ENCODE measurements at regions of chr2 and their contacts with region 1.

Region 1: GRCh38 chr2:24827321-24828237 is 34.4 kb downstream of the CENPO start:
- DNase-seq: peak; percentile 85
- ATAC-seq: peak; percentile 87
- H3K4me3 ChIP-seq: no peak overlapping the region
- H3K27ac ChIP-seq: no peak overlapping the region
- H3K4me1 ChIP-seq: no peaks in the 10 kb centered on the region
- H3K27me3 ChIP-seq: no peaks in the 10 kb centered on the region

Region 2: DNA sequence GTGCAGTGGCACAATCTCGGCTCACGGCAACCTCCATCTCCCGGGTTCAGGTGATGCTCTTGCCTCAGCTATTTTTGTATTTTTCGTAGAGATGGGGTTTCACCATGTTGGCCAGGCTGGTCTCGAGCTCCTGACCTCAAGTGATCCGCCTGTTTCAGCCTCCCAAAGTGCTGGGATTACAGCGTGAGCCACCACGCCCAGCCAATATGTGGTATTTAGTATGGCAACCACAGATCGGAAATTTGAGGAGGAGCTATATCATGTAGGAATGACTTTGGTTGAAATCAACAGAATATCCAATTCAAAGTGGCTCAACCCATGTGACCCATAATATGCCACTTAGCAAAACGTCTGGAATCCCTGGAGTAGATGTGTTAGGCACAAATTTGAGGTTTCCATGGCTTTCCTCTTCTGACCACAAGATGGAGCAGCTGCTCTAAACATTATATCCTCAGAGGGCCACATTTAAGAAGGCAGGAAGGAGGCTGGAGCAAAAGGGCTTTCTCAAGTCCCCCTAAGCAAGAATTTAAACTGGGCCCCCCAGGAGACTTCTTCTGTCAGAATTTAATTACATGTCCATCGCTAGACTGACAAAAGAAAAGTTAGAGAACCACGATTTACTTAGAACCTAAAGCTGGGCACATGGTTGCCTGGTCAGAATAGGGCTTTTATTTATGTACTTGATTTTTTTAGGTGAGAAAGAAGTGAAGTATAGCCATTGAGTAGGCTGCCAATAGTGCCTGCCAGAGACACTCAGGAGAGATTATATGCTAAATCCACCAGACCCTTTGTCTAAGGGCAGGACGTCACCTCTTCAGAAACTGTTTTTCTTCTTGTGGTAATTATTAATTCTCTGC is 417.7 kb before region 1 on chr2:
- intact Hi-C with region 1: loop called (anchors 1 to 2 kb)
- DNase-seq: no peak
- ATAC-seq: peak; percentile 85
- H3K4me3 ChIP-seq: no peak overlapping the region
- H3K27ac ChIP-seq: no peak overlapping the region
- H3K4me1 ChIP-seq: no peaks in the 10 kb centered on the region
- H3K27me3 ChIP-seq: no peaks in the 10 kb centered on the region

Measured in aorta (tissue), 5 donors.